ENCODE measurements at regions of chr15 and their contacts with region 1.

Region 1: GRCh38 chr15:69475769-69476358 is 23.2 kb downstream of the RPLP1 start:
- DNase-seq: peak; percentile 83
- ATAC-seq: peak; percentile 87
- H3K4me3 Mint-ChIP-seq: no peak overlapping the region
- H3K27ac Mint-ChIP-seq: no peak overlapping the region
- H3K4me1 Mint-ChIP-seq: peaks cover 4% of the 10 kb centered on the region
- H3K27me3 Mint-ChIP-seq: peaks cover 2% of the 10 kb centered on the region

Region 2: DNA sequence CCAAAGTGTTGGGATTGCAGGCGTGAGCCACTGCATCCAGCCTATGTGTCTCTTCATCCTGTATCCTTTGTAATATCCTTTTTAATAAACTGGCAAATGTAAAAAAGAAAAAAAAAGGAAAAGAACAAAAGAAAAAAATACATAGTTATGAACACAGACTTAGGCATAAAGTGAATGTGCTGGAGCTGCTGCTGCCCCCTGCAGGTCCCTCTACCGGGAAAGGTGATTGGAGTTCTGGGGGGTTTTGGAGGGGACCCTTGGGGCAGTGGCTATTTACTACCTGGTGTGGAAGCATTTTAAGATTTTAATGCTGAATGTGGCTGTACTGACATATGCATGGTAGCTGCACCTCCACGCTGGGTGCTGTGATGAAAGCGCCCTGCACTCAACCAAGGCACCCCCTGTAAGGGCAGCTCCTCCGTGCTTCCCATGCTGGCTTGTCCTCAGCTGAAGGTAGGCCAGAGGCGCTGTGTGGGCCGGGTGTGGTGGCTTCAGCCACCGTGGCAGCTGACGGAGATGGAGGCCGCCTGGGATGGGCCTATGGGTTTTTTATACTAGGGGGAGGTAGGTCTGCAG is 26.7 kb after region 1 on chr15:
- CTCF ChIA-PET with region 1: interaction called, 10 read pairs
- POLR2A ChIA-PET with region 1: no interaction called
- intact Hi-C with region 1: no loop called
- DNase-seq: no peak
- ATAC-seq: no peak
- H3K4me3 Mint-ChIP-seq: no peak overlapping the region
- H3K27ac Mint-ChIP-seq: no peak overlapping the region
- H3K4me1 Mint-ChIP-seq: peaks cover 6% of the 10 kb centered on the region
- H3K27me3 Mint-ChIP-seq: no peaks in the 10 kb centered on the region

Region 3: GRCh38 chr15:70512772-70513362 is 1037.0 kb after region 1 on chr15:
- CTCF ChIA-PET with region 1: interaction called, 3 read pairs
- POLR2A ChIA-PET with region 1: no interaction called
- intact Hi-C with region 1: loop called in 1 of 2 experiments (anchors 1 kb)
- DNase-seq: peak; percentile 89
- ATAC-seq: peak; percentile 88
- H3K4me3 Mint-ChIP-seq: no peak overlapping the region
- H3K27ac Mint-ChIP-seq: no peak overlapping the region
- H3K4me1 Mint-ChIP-seq: peaks cover 25% of the 10 kb centered on the region
- H3K27me3 Mint-ChIP-seq: peaks cover 2% of the 10 kb centered on the region

Region 4: GRCh38 chr15:70722266-70723121 is 1246.6 kb after region 1 on chr15:
- CTCF ChIA-PET with region 1: interaction called, 10 read pairs
- POLR2A ChIA-PET with region 1: no interaction called
- intact Hi-C with region 1: loop called in 1 of 2 experiments (anchors 10 kb)
- DNase-seq: no peak
- ATAC-seq: no peak
- H3K4me3 Mint-ChIP-seq: no peak overlapping the region
- H3K27ac Mint-ChIP-seq: no peak overlapping the region
- H3K4me1 Mint-ChIP-seq: no peaks in the 10 kb centered on the region
- H3K27me3 Mint-ChIP-seq: peaks cover 4% of the 10 kb centered on the region

Region 5: GRCh38 chr15:71443538-71443937 is 1967.7 kb after region 1 on chr15:
- CTCF ChIA-PET with region 1: no interaction called
- POLR2A ChIA-PET with region 1: no interaction called
- intact Hi-C with region 1: loop called in 1 of 2 experiments (anchors 5 kb)
- DNase-seq: peak; percentile 70
- ATAC-seq: no peak
- H3K4me3 Mint-ChIP-seq: no peak overlapping the region
- H3K27ac Mint-ChIP-seq: no peak overlapping the region
- H3K4me1 Mint-ChIP-seq: no peaks in the 10 kb centered on the region
- H3K27me3 Mint-ChIP-seq: peaks cover 5% of the 10 kb centered on the region